Activated B cell treated with CpG ODN at 0.5 μM for 24 hours (primary cell): ENCODE measurements at regions of chr14 and their contacts with region 1.

Region 1: DNA sequence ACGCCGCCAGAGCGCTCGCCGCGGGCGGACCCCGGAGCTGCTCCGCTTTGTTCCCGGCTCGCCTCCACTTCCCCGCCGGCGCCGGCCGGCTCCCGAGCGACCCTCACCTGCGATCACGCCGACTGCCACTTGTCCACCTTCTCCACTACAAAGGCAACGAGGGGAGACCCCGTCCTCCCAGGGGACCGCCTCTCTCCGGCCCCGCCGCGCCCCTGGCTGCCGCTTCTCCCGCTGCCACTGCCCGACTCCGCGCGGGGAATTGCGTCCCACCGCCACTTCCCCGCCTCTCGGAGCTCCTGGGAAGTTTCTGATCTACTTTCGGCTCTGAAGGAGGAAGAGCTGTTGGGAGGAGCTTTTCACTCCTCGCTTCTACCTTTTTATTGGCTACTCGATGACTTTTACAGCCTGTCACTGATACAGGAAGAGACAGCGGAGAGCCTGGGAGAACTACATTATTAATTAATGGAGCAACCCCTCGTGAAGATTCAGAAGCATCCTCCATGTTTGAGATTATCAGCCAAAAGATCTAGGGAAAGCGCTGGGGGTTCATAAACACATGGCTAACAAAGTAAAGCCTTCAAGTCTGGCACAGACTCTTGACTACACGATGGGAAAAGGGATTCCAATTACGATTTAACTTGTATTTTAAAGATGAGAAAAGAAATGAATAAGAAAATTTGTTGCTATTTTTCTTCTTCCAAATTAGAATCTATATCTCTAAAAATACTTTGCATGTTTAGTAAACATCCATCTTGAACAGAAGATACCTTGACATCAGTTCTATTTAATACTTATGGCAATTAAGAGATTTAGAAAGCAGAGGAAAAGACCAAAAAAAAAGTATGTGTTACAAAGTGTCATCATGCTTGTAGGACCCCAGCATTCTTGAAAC is at the start of gene BAZ1A:
- DNase-seq: peak; percentile 63
- ATAC-seq: peak; percentile 12
- H3K4me3 Mint-ChIP-seq: peak within 1 kb of the TSS; percentile 100
- H3K27ac Mint-ChIP-seq: peak within 1 kb of the TSS; percentile 99
- H3K4me1 Mint-ChIP-seq: peaks cover 35% of the 10 kb centered on the region
- H3K27me3 Mint-ChIP-seq: no peaks in the 10 kb centered on the region
- CTCF ChIP-seq: no peak
- total RNA-seq, gene BAZ1A: 45.3 and 55.9 TPM in 2 replicates

Region 2: GRCh38 chr14:34539407-34540180 is 335.7 kb before region 1 on chr14 and contains the start of gene EAPP:
- CTCF ChIA-PET with region 1: no interaction called
- POLR2A ChIA-PET with region 1: no interaction called
- intact Hi-C with region 1: loop called (anchors 5 kb)
- DNase-seq: peak; percentile 86
- ATAC-seq: peak; percentile 99
- H3K4me3 Mint-ChIP-seq: peak within 1 kb of the TSS; percentile 99
- H3K27ac Mint-ChIP-seq: peak within 1 kb of the TSS; percentile 97
- H3K4me1 Mint-ChIP-seq: peaks cover 34% of the 10 kb centered on the region
- H3K27me3 Mint-ChIP-seq: no peaks in the 10 kb centered on the region
- CTCF ChIP-seq: no peak
- total RNA-seq, gene EAPP: 40.7 and 43.2 TPM in 2 replicates

Region 3: GRCh38 chr14:34714320-34715126 is 160.8 kb before region 1 on chr14 and contains the start of gene CFL2:
- CTCF ChIA-PET with region 1: no interaction called
- POLR2A ChIA-PET with region 1: interaction called, 7 read pairs
- intact Hi-C with region 1: loop called (anchors 1 kb)
- DNase-seq: peak; percentile 80
- ATAC-seq: peak; percentile 90
- H3K4me3 Mint-ChIP-seq: peak within 1 kb of the TSS; percentile 92
- H3K27ac Mint-ChIP-seq: peak within 1 kb of the TSS; percentile 89
- H3K4me1 Mint-ChIP-seq: peaks cover 32% of the 10 kb centered on the region
- H3K27me3 Mint-ChIP-seq: no peaks in the 10 kb centered on the region
- CTCF ChIP-seq: no peak
- total RNA-seq, gene CFL2: 19.1 and 20.8 TPM in 2 replicates

Region 4: DNA sequence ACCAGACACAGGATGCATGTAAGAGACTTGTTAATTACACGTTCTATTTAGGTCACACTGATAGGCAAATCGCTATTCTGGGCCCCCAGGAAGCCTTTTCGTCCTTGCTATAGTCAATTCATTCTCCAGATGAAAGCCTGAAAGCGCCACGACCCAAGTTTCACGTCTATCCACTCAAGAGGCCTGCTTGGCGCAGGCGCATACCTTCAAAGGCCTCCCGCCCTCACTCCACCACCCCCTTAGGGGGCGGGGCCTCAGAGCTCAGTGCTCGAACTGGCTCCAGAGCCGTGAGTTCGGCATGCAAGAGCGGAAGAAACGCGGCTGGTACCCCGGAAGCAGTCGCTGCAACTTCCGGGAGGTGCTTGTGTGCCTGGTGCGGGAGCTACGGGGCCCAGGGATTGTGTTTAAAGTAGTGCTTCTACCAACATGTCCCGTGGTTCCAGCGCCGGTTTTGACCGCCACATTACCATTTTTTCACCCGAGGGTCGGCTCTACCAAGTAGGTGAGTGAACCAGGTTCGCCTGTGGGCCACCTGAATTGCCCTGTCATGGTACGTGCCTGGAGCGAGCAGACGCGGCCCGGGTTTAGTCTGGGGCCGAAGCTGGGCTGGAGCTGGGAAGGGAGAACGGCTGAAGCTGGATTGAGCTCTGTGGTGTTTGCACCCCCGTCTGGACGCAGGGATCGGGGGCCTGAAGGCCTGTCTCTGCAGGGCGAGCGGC is 416.9 kb after region 1 on chr14 and contains the start of gene PSMA6:
- CTCF ChIA-PET with region 1: no interaction called
- POLR2A ChIA-PET with region 1: no interaction called
- intact Hi-C with region 1: loop called (anchors 1 kb)
- DNase-seq: peak; percentile 93
- ATAC-seq: peak; percentile 97
- H3K4me3 Mint-ChIP-seq: peak within 1 kb of the TSS; percentile 99
- H3K27ac Mint-ChIP-seq: peak within 1 kb of the TSS; percentile 96
- H3K4me1 Mint-ChIP-seq: peaks cover 61% of the 10 kb centered on the region
- H3K27me3 Mint-ChIP-seq: no peaks in the 10 kb centered on the region
- CTCF ChIP-seq: no peak
- total RNA-seq, gene PSMA6: 163 and 180 TPM in 2 replicates

Region 5: GRCh38 chr14:35826218-35826951 is 951.1 kb after region 1 on chr14 and contains the start of gene BRMS1L:
- CTCF ChIA-PET with region 1: no interaction called
- POLR2A ChIA-PET with region 1: no interaction called
- intact Hi-C with region 1: loop called (anchors 5 kb)
- DNase-seq: peak; percentile 90
- ATAC-seq: peak; percentile 96
- H3K4me3 Mint-ChIP-seq: peak within 1 kb of the TSS; percentile 87
- H3K27ac Mint-ChIP-seq: peak within 1 kb of the TSS; percentile 92
- H3K4me1 Mint-ChIP-seq: peaks cover 19% of the 10 kb centered on the region
- H3K27me3 Mint-ChIP-seq: no peaks in the 10 kb centered on the region
- CTCF ChIP-seq: no peak
- total RNA-seq, gene BRMS1L: 3.7 and 4.4 TPM in 2 replicates